ENCODE measurements at regions of chr3 and their contacts with region 1.

Region 1: DNA sequence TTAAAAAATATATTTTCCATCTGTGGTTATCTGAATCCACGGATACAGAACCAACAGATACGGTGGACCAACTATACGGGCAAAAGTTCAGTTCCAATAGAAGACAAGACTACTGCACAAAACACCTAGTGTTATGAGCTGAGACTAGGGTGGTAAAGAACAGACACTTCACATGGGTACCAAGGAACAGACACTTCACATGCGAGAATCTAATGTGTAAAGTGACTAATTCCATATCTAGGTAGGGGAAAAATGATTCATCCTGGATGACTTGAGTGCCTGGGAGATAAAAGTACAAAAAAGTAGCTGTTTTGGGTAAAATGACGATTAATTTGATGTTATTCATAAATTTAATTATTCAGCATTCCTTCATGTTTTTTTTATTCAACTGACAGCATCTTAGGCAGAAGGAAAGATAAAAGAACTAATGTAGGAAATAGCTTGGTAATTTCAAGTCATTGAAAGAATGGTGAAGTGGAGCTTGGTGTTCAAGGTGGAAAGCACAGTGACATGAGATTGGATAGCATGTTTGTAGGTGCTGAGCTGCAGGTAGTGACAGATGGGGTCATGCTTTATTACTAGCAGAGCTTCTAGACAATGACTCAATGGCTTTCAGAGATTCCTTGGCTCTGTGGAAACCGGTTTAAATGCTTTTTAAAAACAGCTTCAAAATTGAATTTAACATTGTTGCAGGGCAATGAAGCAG is 5.2 kb downstream of the CD200 start:
- DNase-seq: no peak
- H3K4me3 Mint-ChIP-seq: peak overlapping the region; percentile 35
- H3K27ac Mint-ChIP-seq: peak overlapping the region; percentile 88
- H3K4me1 Mint-ChIP-seq: peaks cover 79% of the 10 kb centered on the region
- H3K27me3 Mint-ChIP-seq: no peaks in the 10 kb centered on the region

Region 2: DNA sequence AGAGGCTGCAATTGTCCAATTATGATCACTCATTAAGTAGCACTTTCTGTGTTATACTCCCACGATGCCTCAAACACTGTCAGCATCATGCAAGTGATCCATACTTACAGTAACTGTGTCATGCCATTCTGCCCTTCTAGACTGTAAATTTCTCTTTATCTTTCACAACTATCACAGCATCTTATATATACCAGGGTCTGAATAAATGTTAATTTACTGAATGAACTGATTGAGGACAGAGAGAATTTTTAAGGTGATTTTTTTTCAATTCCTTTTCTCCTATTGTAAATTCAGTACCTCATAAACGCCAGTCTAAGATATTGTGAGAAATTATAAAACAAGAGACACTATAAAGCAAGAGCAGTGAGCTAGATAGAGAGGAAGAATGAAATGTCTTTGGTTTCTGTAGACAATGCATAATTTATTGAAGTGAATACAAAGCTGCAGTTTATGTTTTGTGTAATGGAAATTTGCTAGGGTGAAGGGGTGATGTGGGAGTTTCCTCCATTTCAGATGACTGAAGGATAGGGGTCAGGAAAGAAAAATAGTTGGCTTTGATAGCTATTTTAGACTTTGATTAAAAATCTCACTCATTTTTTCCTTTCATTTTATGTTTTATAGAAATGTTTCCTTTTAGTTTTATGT is 12.1 kb after region 1 on chr3:
- CTCF ChIA-PET with region 1: interaction called, 7 read pairs
- POLR2A ChIA-PET with region 1: interaction called, 10 read pairs
- intact Hi-C with region 1: loop called (anchors 1 kb)
- DNase-seq: no peak
- H3K4me3 Mint-ChIP-seq: no peak overlapping the region
- H3K27ac Mint-ChIP-seq: no peak overlapping the region
- H3K4me1 Mint-ChIP-seq: peaks cover 46% of the 10 kb centered on the region
- H3K27me3 Mint-ChIP-seq: no peaks in the 10 kb centered on the region

Region 3: GRCh38 chr3:112357930-112358780 is 20.0 kb after region 1 on chr3:
- CTCF ChIA-PET with region 1: no interaction called
- POLR2A ChIA-PET with region 1: interaction called, 5 read pairs
- intact Hi-C with region 1: loop called (anchors 2 kb)
- DNase-seq: peak; percentile 62
- H3K4me3 Mint-ChIP-seq: peak overlapping the region; percentile 38
- H3K27ac Mint-ChIP-seq: peak overlapping the region; percentile 70
- H3K4me1 Mint-ChIP-seq: peaks cover 23% of the 10 kb centered on the region
- H3K27me3 Mint-ChIP-seq: no peaks in the 10 kb centered on the region

Region 4: DNA sequence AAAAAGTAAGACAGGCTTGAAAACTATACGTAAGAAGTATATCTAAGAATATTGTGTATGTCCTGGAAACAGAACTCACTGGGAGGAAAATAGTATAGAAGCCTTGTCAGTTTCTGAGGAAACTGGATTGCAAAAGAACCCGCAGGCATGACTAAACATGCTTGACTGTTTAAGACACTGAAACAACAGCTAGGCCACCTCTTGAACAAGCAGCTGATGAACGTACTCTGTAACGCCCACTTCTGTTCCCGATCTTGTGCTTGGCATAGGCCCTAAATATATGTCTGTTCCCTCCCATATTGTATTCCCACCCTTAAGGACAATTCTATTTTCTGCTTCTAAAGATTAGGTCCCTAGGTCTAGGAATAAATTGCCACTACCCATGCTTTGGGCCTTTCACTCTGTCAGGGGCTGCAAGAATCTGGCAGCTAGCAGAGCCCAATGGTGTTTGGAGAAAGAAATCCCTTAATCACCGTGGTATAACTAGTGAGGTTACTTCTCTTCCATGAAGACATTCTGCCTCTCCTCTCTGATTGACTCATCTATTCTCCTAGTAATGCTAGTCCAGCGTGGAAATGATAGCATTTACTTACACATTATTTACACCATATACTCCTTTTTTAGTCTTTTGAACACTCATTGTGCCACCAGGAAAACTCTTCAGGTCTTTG is 41.0 kb after region 1 on chr3:
- CTCF ChIA-PET with region 1: interaction called, 3 read pairs
- POLR2A ChIA-PET with region 1: no interaction called
- intact Hi-C with region 1: loop called (anchors 1 kb)
- DNase-seq: no peak
- H3K4me3 Mint-ChIP-seq: no peak overlapping the region
- H3K27ac Mint-ChIP-seq: no peak overlapping the region
- H3K4me1 Mint-ChIP-seq: peaks cover 28% of the 10 kb centered on the region
- H3K27me3 Mint-ChIP-seq: no peaks in the 10 kb centered on the region

Region 5: DNA sequence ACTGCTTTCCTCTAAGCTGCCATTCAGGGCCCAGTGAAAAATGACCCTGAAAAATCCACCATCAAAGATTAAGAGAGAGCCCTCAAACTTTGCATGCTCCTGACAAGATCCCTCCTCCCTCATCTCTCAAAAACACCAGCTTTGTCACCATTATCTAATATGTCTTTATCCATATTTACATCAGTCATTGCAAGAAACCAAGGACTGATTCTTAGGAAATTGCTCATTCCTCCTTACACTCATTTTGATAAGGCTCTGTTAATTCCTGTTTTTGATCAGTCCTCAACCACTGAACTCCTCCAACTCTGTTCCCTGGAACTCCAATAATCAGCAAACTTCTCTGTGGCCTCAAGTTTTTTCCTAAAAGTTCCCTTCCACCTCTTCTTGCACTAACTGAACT is 46.6 kb after region 1 on chr3:
- CTCF ChIA-PET with region 1: interaction called, 3 read pairs
- POLR2A ChIA-PET with region 1: no interaction called
- intact Hi-C with region 1: loop called (anchors 1 kb)
- DNase-seq: no peak
- H3K4me3 Mint-ChIP-seq: no peak overlapping the region
- H3K27ac Mint-ChIP-seq: peak overlapping the region; percentile 44
- H3K4me1 Mint-ChIP-seq: peaks cover 37% of the 10 kb centered on the region
- H3K27me3 Mint-ChIP-seq: no peaks in the 10 kb centered on the region

Region 6: DNA sequence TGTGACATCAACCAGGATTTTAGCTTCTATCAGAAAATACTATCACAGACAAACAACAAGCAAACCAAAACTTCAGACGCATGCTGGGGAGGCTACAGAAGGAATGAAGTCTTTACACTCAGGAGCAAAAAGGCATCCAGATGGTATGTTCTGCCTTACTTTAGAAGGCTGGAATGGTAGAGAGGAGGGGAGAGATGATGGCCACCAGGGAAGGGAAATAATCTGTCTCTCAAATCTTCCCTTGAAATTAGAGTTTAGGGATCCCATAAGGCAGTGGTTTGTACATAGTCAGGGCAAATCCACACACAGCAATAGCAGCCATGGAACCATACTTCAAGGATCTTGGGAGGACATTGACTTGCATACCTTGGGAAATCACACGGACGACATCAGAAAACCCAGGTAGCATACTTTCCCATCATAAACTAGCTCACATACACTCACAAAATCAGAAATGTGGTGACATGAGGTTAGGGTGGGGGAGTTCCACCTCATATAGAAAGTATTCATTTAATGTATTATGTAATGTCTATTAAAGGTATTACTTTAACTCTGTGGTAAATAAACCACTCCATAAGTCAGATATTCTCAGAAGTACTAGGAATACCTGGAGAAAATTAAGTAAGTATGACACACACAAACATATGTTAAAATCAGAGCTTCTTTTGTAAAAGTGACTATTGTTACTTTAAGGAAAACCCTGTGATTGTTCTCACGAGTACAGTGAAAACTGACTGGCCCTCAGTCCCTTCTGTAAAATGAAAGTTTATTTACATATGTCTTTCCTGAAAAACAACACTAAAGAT is 151.7 kb after region 1 on chr3:
- CTCF ChIA-PET with region 1: interaction called, 5 read pairs
- POLR2A ChIA-PET with region 1: no interaction called
- intact Hi-C with region 1: loop called (anchors 2 kb)
- DNase-seq: no peak
- H3K4me3 Mint-ChIP-seq: peak overlapping the region; percentile 47
- H3K27ac Mint-ChIP-seq: peak overlapping the region; percentile 68
- H3K4me1 Mint-ChIP-seq: peaks cover 64% of the 10 kb centered on the region
- H3K27me3 Mint-ChIP-seq: no peaks in the 10 kb centered on the region

Region 7: GRCh38 chr3:112498914-112499711 is 160.9 kb after region 1 on chr3 and contains the start of gene BTLA:
- CTCF ChIA-PET with region 1: interaction called, 14 read pairs
- POLR2A ChIA-PET with region 1: interaction called, 13 read pairs
- intact Hi-C with region 1: loop called (anchors 2 kb)
- DNase-seq: peak; percentile 59
- H3K4me3 Mint-ChIP-seq: peak within 1 kb of the TSS; percentile 99
- H3K27ac Mint-ChIP-seq: peak within 1 kb of the TSS; percentile 98
- H3K4me1 Mint-ChIP-seq: peaks cover 55% of the 10 kb centered on the region
- H3K27me3 Mint-ChIP-seq: no peaks in the 10 kb centered on the region
- total RNA-seq, gene BTLA: 17.3 to 18.7 TPM